Sciatic nerve (tissue), 2 donors: ENCODE measurements at regions of chr17 and their contacts with region 1.

Region 1: GRCh38 chr17:65826285-65826976 is 265.0 kb upstream of the AXIN2 start:
- DNase-seq: no peak
- ATAC-seq: no peak

Region 2: DNA sequence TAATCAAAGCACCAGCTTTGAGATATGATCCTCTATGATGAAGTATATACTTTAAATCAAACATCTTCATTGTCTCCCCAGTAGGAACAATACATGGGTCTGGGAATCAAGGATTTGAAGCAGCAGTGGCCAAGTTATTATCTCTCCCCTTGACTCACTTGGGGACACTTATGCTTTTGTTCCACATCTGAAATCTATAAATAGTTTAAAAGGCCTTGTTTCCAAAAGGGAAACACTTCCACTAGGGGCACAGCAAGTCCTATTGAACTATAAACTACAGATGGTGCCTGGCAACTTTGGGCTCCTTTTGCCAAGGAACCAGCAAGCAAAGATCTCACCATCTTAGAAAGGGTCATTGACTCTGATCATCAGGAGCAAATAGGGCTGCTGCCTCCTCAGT is 381.5 kb after region 1 on chr17:
- intact Hi-C with region 1: loop called (anchors 5 kb)
- DNase-seq: no peak
- ATAC-seq: no peak